ENCODE measurements at regions of chr9 and their contacts with region 1.

Region 1: GRCh38 chr9:89278997-89279739 is 31.8 kb upstream of the CKS2 start:
- DNase-seq: no peak
- ATAC-seq: no peak
- H3K4me3 ChIP-seq: no peak overlapping the region
- H3K27ac ChIP-seq: no peak overlapping the region
- H3K4me1 ChIP-seq: no peaks in the 10 kb centered on the region
- H3K27me3 ChIP-seq: no peaks in the 10 kb centered on the region

Region 2: GRCh38 chr9:88593537-88594185 is 685.5 kb before region 1 on chr9:
- intact Hi-C with region 1: loop called (anchors 5 to 10 kb)
- DNase-seq: no peak
- ATAC-seq: peak; percentile 84
- H3K4me3 ChIP-seq: no peak overlapping the region
- H3K27ac ChIP-seq: no peak overlapping the region
- H3K4me1 ChIP-seq: no peaks in the 10 kb centered on the region
- H3K27me3 ChIP-seq: no peaks in the 10 kb centered on the region

Region 3: GRCh38 chr9:88980740-88981203 is 298.4 kb before region 1 on chr9:
- intact Hi-C with region 1: no loop called
- DNase-seq: no peak
- ATAC-seq: peak; percentile 44
- H3K4me3 ChIP-seq: no peak overlapping the region
- H3K27ac ChIP-seq: no peak overlapping the region
- H3K4me1 ChIP-seq: no peaks in the 10 kb centered on the region
- H3K27me3 ChIP-seq: no peaks in the 10 kb centered on the region

Region 4: GRCh38 chr9:89179895-89180667 is 99.1 kb before region 1 on chr9:
- intact Hi-C with region 1: loop called in 1 of 2 experiments (anchors 10 kb)
- DNase-seq: peak; percentile 93 to 94
- ATAC-seq: peak; percentile 94
- H3K4me3 ChIP-seq: peak overlapping the region; percentile 22 to 66
- H3K27ac ChIP-seq: peak overlapping the region in 1 of 2 donors; percentile 91
- H3K4me1 ChIP-seq: no peaks in the 10 kb centered on the region
- H3K27me3 ChIP-seq: no peaks in the 10 kb centered on the region

Measured in aorta (tissue), 5 donors.